Activated T-helper 2 cell treated with anti-CD3 and anti-CD28 coated beads, Interferon-gamma antibody, Interleukin-2, Interleukin-4, amounts not matched to agents 10 μg/mL and 5 μg/mL and 100 μg/mL, durations not matched to agents 14 hours and 24 hours and 36 hours (primary cell): ENCODE measurements at regions of chrX and their contacts with region 1.

Region 1: GRCh38 chrX:54182864-54183608 is at the start of gene FAM120C:
- DNase-seq: peak; percentile 50
- H3K4me3 Mint-ChIP-seq: peak within 1 kb of the TSS; percentile 86
- H3K27ac Mint-ChIP-seq: peak within 1 kb of the TSS; percentile 81
- H3K4me1 Mint-ChIP-seq: peaks cover 39% of the 10 kb centered on the region
- H3K27me3 Mint-ChIP-seq: no peaks in the 10 kb centered on the region
- total RNA-seq, gene FAM120C: 10.0 and 10.6 TPM in 2 replicates

Region 2: GRCh38 chrX:54230435-54231148 is 47.6 kb after region 1 on chrX:
- intact Hi-C with region 1: no loop called
- DNase-seq: no peak
- H3K4me3 Mint-ChIP-seq: no peak overlapping the region
- H3K27ac Mint-ChIP-seq: no peak overlapping the region
- H3K4me1 Mint-ChIP-seq: no peaks in the 10 kb centered on the region
- H3K27me3 Mint-ChIP-seq: no peaks in the 10 kb centered on the region

Region 3: GRCh38 chrX:54529552-54530357 is 346.7 kb after region 1 on chrX and contains the start of gene GNL3L:
- intact Hi-C with region 1: loop called (anchors 10 kb)
- DNase-seq: peak; percentile 74
- H3K4me3 Mint-ChIP-seq: peak within 1 kb of the TSS; percentile 91
- H3K27ac Mint-ChIP-seq: peak within 1 kb of the TSS; percentile 95
- H3K4me1 Mint-ChIP-seq: peaks cover 24% of the 10 kb centered on the region
- H3K27me3 Mint-ChIP-seq: no peaks in the 10 kb centered on the region
- total RNA-seq, gene GNL3L: 63.6 and 64.5 TPM in 2 replicates